ENCODE measurements at regions of chr12 and their contacts with region 1.

Region 1: DNA sequence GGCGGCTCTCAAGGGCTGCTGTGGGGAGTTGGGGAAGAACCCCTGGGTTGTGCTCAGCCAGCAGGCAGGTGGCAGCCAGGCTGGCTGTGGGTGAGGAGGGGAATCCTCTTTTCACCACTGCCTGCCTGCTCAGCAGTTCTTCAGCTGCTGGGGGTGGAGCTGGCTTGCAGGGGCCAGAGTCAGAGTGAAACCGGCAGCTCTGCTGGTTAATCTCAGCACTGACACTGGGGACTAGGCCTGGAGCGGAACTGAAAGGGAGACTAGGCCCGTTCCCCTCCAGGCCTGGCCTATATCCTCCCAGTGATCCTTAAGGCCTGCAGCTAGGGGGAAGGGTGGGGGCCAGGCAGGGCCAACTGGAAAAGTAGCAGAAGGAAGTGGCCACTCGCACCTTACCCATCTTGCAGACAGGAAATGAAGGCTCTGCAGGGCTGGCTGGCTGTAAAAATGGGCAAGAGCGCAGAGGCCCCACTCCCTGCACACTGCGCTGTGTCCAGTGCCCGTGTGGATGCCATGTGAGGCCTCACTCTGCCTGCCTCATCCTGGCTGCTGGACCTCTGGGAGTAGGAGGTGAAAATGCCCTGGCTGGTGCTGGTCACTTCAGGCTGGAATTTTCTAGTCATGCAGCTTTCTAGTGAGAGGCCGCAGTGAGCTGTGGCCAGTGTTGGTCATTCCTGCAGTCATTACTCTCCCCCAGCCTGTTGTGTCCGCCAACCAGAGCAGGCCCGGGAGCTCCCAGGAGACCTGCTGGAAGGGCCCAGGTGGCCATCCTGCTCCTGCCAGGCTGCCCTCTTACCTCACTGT is 39.4 kb downstream of the SH2B3 start:
- DNase-seq: peak in 34 of 35 experiments; percentile 60 to 92 (median 84)
- ATAC-seq: peak; percentile 88 to 97 (median 93)
- H3K4me3 ChIP-seq: peak overlapping the region in 1 of 2 donors; percentile 13
- H3K4me3 Mint-ChIP-seq: peak overlapping the region; percentile 31 to 64 (median 49)
- H3K27ac ChIP-seq: peak overlapping the region; percentile 89
- H3K27ac Mint-ChIP-seq: peak overlapping the region; percentile 89 to 96
- H3K4me1 ChIP-seq: peaks cover 16 to 69% of the 10 kb centered on the region in 2 experiments
- H3K4me1 Mint-ChIP-seq: peaks cover 65 to 95% (median 78%) of the 10 kb centered on the region in 3 donors
- H3K27me3 ChIP-seq: no peaks in the 10 kb centered on the region
- H3K27me3 Mint-ChIP-seq: no peaks in the 10 kb centered on the region

Region 2: DNA sequence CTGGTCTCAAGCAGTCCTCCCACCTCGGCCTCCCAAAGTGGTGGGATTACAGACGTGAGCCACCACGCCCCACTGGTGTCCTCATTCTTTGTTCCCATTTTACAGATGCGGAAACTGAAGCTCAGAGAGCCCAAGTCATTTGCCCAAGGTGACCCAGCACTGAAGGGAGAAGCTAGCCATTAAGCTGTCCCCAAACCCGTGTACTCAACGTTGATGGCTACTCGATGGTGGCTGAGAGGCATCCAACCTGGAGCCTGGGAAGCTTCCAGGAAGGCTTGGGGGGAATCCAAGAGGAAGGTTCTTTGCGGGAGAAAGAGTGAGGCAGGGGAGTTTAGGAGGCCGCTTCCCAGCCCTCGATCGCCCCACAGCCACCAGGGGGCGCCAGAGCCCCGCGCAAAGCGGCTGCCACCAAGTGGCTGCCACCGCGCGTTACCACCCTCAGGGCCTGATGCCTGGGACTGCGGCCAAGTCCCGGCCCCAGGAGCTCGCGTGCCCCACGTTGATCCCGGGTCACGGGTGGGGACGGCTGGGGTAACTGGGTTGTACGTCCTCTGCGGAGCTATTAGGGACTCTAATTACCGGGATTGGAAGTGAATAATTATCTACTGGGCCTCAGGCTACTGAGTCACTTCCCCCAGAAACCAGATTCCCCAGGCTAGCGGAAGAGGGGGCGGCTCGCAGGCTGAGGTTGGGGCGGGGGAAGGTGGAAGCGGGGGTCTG is 48.2 kb before region 1 on chr12:
- CTCF ChIA-PET with region 1: interaction called, 138 to 218 read pairs
- POLR2A ChIA-PET with region 1: interaction called in 1 of 2 experiments, 3 read pairs
- DNase-seq: peak; percentile 62 to 93 (median 83)
- ATAC-seq: peak; percentile 92 to 98 (median 94)
- H3K4me3 ChIP-seq: peak overlapping the region in 1 of 2 donors; percentile 26
- H3K4me3 Mint-ChIP-seq: peak overlapping the region; percentile 44 to 66 (median 65)
- H3K27ac ChIP-seq: no peak overlapping the region
- H3K27ac Mint-ChIP-seq: peak overlapping the region in 1 of 2 donors; percentile 52
- H3K4me1 ChIP-seq: peaks cover 0 to 9% of the 10 kb centered on the region in 2 experiments
- H3K4me1 Mint-ChIP-seq: peaks cover 7 to 17% (median 13%) of the 10 kb centered on the region in 3 donors
- H3K27me3 ChIP-seq: peaks cover 0 to 3% of the 10 kb centered on the region in 2 experiments
- H3K27me3 Mint-ChIP-seq: no peaks in the 10 kb centered on the region

Region 3: GRCh38 chr12:111405149-111405860 is 39.8 kb before region 1 on chr12:
- CTCF ChIA-PET with region 1: interaction called, 138 to 218 read pairs
- POLR2A ChIA-PET with region 1: interaction called, 3 read pairs
- DNase-seq: peak; percentile 94 to 100 (median 98)
- ATAC-seq: peak; percentile 77 to 83 (median 78)
- H3K4me3 ChIP-seq: peak overlapping the region; percentile 26 to 65
- H3K4me3 Mint-ChIP-seq: peak overlapping the region; percentile 81 to 85 (median 85)
- H3K27ac ChIP-seq: peak overlapping the region; percentile 70
- H3K27ac Mint-ChIP-seq: peak overlapping the region; percentile 90 to 92
- H3K4me1 ChIP-seq: peaks cover 30 to 68% of the 10 kb centered on the region in 2 experiments
- H3K4me1 Mint-ChIP-seq: peaks cover 58 to 63% (median 59%) of the 10 kb centered on the region in 3 donors
- H3K27me3 ChIP-seq: no peaks in the 10 kb centered on the region
- H3K27me3 Mint-ChIP-seq: no peaks in the 10 kb centered on the region

Measured in T-cell (primary cell).